Activated B cell treated with CpG ODN at 0.5 μM for 24 hours (primary cell): ENCODE measurements at regions of chr17 and their contacts with region 1.

Region 1: GRCh38 chr17:64491034-64491859 is 5.6 kb downstream of the POLG2 start:
- DNase-seq: no peak
- ATAC-seq: peak; percentile 72
- H3K4me3 Mint-ChIP-seq: no peak overlapping the region
- H3K27ac Mint-ChIP-seq: no peak overlapping the region
- H3K4me1 Mint-ChIP-seq: peaks cover 28% of the 10 kb centered on the region
- H3K27me3 Mint-ChIP-seq: no peaks in the 10 kb centered on the region
- CTCF ChIP-seq: no peak

Region 2: GRCh38 chr17:64306850-64307463 is 184.3 kb before region 1 on chr17:
- CTCF ChIA-PET with region 1: interaction called, 4 read pairs
- POLR2A ChIA-PET with region 1: interaction called, 4 read pairs
- intact Hi-C with region 1: loop called (anchors 2 kb)
- DNase-seq: peak; percentile 50
- ATAC-seq: peak; percentile 58
- H3K4me3 Mint-ChIP-seq: no peak overlapping the region
- H3K27ac Mint-ChIP-seq: no peak overlapping the region
- H3K4me1 Mint-ChIP-seq: no peaks in the 10 kb centered on the region
- H3K27me3 Mint-ChIP-seq: no peaks in the 10 kb centered on the region
- CTCF ChIP-seq: peak; percentile 76

Region 3: GRCh38 chr17:64320613-64321553 is 170.4 kb before region 1 on chr17:
- CTCF ChIA-PET with region 1: interaction called, 3 read pairs
- POLR2A ChIA-PET with region 1: interaction called, 4 read pairs
- intact Hi-C with region 1: loop called (anchors 5 kb)
- DNase-seq: peak; percentile 21
- ATAC-seq: no peak
- H3K4me3 Mint-ChIP-seq: peak overlapping the region; percentile 55
- H3K27ac Mint-ChIP-seq: no peak overlapping the region
- H3K4me1 Mint-ChIP-seq: peaks cover 43% of the 10 kb centered on the region
- H3K27me3 Mint-ChIP-seq: peaks cover 2% of the 10 kb centered on the region
- CTCF ChIP-seq: no peak